GM10248 (cell line): ENCODE measurements at regions of chr1 and their contacts with region 1.

Region 1: GRCh38 chr1:205711104-205712020 is 31.1 kb upstream of the SLC45A3 start:
- DNase-seq: peak; percentile 58
- CTCF ChIP-seq: peak; percentile 83

Region 2: DNA sequence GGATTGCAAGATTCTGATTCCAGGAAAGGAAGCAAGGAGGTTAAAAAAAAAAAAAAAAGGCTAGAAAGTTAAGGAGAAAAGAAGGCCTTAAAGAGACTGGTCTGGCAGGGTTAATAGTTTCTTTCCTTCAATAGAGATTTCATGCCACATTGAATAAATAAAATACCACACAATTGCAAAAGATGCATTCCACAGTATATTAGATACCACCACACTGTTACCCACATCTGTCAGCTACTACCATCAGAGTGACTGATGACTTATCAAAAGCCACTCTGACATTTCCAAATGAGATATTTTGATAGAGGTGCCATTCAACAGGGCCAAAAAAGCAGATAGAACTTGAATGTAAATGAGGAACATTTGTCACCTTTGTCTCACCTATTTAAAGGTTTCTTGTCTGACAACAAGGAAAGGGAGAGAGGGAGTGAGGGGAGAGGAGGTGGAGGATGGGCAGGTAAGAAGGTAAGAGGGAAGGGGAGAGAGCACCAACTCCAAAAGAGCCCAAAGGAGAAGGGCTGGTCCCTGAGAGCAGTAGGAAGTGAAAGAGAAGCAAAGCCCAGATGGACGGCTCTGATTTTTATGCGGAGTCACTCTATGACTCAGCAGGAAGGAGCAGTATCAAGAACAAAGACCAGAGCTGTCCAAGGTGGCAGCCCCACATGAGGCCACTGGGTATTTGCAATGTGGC is 1064.1 kb before region 1 on chr1:
- CTCF ChIA-PET with region 1: no interaction called
- POLR2A ChIA-PET with region 1: no interaction called
- DNase-seq: peak; percentile 68
- CTCF ChIP-seq: no peak

Region 3: GRCh38 chr1:205600085-205600484 is 111.3 kb before region 1 on chr1:
- CTCF ChIA-PET with region 1: interaction called, 112 read pairs
- POLR2A ChIA-PET with region 1: no interaction called
- DNase-seq: peak; percentile 55
- CTCF ChIP-seq: no peak

Region 4: DNA sequence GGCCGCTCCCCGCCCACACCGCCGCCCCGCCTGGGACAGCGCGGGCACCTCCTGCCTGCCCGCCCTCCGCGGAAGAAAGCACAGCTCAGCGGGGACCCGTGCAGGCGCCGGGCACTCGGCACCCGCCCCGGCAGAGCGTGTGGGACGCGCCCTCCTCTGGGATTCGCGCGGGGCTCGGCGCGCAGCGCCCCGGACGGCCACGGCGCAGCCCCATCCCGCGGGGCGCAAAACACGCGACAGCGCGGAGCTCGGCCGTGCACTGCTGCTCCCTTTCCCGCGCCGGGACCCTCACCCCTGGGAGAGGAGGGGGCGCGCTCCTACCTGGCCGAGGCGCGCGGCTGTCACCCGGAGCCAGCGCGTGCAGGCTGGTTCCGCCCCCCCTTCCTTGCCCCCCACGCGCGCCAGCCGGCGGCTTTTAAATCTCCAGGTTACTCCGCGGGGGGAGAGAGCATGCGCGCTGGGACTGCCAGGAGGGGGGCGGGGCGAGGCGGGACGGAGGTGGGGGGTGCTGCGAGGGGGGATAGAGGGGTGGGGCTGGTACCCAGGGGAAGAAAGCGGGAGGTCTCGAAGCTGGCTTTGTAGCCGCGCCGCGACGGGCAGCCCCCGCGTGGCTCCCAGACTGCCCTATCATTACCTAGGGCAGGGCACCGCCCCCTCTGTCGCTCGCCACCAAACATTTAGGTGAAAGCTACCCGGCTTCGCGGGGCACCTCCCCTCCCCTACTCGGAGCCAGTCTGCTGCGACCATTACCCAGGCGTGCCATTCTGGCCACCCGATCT is 31.1 kb before region 1 on chr1 and contains the start of gene SLC45A3:
- CTCF ChIA-PET with region 1: interaction called, 28 read pairs
- POLR2A ChIA-PET with region 1: no interaction called
- DNase-seq: peak; percentile 53
- CTCF ChIP-seq: no peak

Region 5: GRCh38 chr1:205700865-205701401 is 10.4 kb before region 1 on chr1:
- CTCF ChIA-PET with region 1: interaction called, 61 read pairs
- POLR2A ChIA-PET with region 1: no interaction called
- DNase-seq: no peak
- CTCF ChIP-seq: no peak

Region 6: GRCh38 chr1:205735218-205735617 is 23.9 kb after region 1 on chr1:
- CTCF ChIA-PET with region 1: interaction called, 42 read pairs
- POLR2A ChIA-PET with region 1: no interaction called
- DNase-seq: no peak
- CTCF ChIP-seq: no peak

Region 7: GRCh38 chr1:205896320-205896719 is 185.0 kb after region 1 on chr1:
- CTCF ChIA-PET with region 1: no interaction called
- POLR2A ChIA-PET with region 1: no interaction called
- DNase-seq: no peak
- CTCF ChIP-seq: no peak